ENCODE measurements at regions of chrX and their contacts with region 1.

Region 1: GRCh38 chrX:109911046-109911445 is 91.9 kb upstream of the TMEM164 start:
- DNase-seq: no peak
- H3K4me3 ChIP-seq: no peak overlapping the region
- H3K27ac ChIP-seq: no peak overlapping the region
- H3K4me1 ChIP-seq: no peaks in the 10 kb centered on the region
- H3K27me3 ChIP-seq: no peaks in the 10 kb centered on the region
- CTCF ChIP-seq: peak in 5 of 6 experiments; percentile 9 to 55 (median 45)
- POLR2A ChIP-seq: no peak

Region 2: GRCh38 chrX:110146521-110146920 is 235.5 kb after region 1 on chrX:
- intact Hi-C with region 1: loop called (anchors 10 kb)
- DNase-seq: peak in 1 of 2 donors; percentile 13
- H3K4me3 ChIP-seq: no peak overlapping the region
- H3K27ac ChIP-seq: no peak overlapping the region
- H3K4me1 ChIP-seq: no peaks in the 10 kb centered on the region
- H3K27me3 ChIP-seq: no peaks in the 10 kb centered on the region
- CTCF ChIP-seq: peak in 5 of 6 experiments; percentile 20 to 58 (median 53)
- POLR2A ChIP-seq: no peak

Measured in thyroid gland (tissue), 4 donors.